K562 (cell line): ENCODE measurements at regions of chr5 and their contacts with region 1.

Region 1: GRCh38 chr5:99032234-99033013 is 103.6 kb upstream of the CHD1 start:
- DNase-seq: peak; percentile 35 to 84 (median 60)
- ATAC-seq: peak; percentile 84
- H3K4me3 ChIP-seq: no peak overlapping the region
- H3K27ac ChIP-seq: peak overlapping the region; percentile 58; the same call in 1 of the 3 replicates
- H3K4me1 ChIP-seq: peaks cover 0 to 13% of the 10 kb centered on the region in 2 experiments; a peak in 2 of 5 replicates
- H3K27me3 ChIP-seq: no peaks in the 10 kb centered on the region
- CTCF ChIP-seq: peak; percentile 78 to 89 (median 84)
- EP300 ChIP-seq: no peak
- POLR2A ChIP-seq: no peak
- RAD21 ChIP-seq: peak; percentile 97

Region 2: GRCh38 chr5:98804066-98804465 is 228.4 kb before region 1 on chr5:
- CTCF ChIA-PET with region 1: no interaction called
- POLR2A ChIA-PET with region 1: no interaction called
- in situ Hi-C with region 1: no loop called
- intact Hi-C with region 1: no loop called
- DNase-seq: no peak
- ATAC-seq: no peak
- H3K4me3 ChIP-seq: no peak overlapping the region
- H3K27ac ChIP-seq: no peak overlapping the region
- H3K4me1 ChIP-seq: no peaks in the 10 kb centered on the region
- H3K27me3 ChIP-seq: no peaks in the 10 kb centered on the region
- CTCF ChIP-seq: no peak
- EP300 ChIP-seq: no peak
- POLR2A ChIP-seq: no peak
- RAD21 ChIP-seq: no peak

Region 3: DNA sequence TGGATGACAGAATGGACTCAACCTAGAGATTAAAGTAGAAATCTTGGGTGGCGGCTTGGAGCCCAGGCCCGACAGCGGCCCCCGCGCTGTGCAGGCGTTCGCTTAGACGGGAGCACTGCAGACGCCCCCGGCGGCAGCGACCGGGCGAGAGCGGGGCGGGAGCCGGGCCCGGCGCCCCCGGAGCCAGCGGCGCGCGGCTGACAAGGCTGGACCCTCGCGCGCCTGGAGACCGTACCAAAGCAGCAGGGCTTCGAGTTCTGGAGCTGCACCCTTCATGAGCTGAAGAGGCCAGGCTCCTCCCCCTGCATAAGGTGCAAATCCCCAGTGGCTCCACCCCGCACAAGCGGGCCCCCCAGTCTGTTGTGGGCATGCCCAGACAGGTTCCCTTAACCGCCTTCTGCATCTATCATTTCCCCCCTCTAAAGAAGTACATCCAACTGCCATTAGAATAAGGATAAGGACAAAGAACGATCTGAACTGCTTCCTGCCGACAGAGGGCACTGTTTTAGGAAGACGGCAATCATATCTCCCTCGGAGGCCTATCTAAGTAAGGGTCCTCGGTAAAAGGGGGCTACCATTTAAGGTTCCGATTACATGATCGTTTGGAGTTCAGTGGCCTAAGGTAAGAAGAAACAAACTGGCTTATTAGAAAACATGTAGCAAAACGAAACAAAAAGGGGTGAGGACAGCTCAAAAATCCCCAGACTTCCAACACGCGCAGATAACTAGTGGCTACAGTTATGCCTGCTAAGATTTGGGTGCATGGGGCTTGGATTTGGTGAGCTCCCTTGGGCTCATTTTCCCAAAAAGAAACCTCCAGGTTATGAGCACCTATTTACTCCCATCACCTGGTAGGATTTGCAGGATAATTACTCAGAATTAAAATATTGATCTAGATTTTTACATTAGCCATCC is 192.7 kb before region 1 on chr5:
- CTCF ChIA-PET with region 1: no interaction called
- POLR2A ChIA-PET with region 1: no interaction called
- in situ Hi-C with region 1: no loop called
- intact Hi-C with region 1: loop called (anchors 5 kb)
- DNase-seq: peak in 2 of 4 experiments; percentile 13 to 47
- ATAC-seq: peak; percentile 91
- H3K4me3 ChIP-seq: no peak overlapping the region
- H3K27ac ChIP-seq: no peak overlapping the region
- H3K4me1 ChIP-seq: peaks cover 0 to 3% of the 10 kb centered on the region in 2 experiments; a peak in 1 of 5 replicates
- H3K27me3 ChIP-seq: no peaks in the 10 kb centered on the region
- CTCF ChIP-seq: peak; percentile 27 to 41 (median 30); a peak in 4 of 6 replicates
- EP300 ChIP-seq: no peak
- POLR2A ChIP-seq: no peak
- RAD21 ChIP-seq: peak in 1 of 2 experiments; percentile 34; a peak in 2 of 4 replicates

Region 4: DNA sequence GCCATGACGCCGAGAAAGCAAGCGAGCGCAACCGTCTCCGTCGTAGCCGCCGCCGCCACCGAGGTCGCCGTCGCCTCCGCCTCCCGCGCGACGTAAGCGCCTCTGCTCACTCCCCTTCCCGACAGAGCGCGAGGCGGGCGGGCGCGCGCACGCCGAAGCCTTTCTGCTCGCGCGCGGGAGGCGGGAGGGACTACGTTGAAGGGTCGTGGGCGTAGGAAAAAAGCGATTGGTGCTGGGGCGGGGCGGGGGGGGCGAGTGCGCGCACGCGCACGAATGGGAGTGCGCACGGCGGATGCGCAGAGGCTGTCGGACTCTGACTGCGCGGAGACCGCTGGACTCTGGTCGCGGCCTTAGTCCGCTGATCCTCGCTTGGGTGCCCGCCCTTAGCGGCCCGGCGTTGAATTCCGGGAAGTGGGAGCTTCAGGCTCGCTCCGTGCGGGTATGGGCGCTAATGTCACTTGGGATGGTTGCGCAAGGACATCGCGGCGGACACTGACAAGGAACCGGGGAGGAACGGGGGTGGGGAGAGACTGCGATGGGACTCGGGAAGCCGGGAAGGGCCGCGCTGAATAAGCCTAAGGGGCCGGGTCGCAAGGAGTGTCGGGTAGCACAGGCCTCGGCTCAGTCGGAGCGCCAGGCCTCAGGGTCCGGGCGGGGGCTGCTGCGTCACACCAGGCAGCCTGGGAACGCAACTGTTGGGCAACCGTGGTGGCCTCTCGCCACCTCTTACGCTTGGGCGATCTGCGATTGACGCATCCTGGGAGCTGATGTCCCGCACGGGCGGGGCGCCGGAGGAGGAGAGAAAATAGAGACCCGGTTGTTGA is 103.3 kb before region 1 on chr5 and contains the start of gene CHD1:
- CTCF ChIA-PET with region 1: no interaction called
- POLR2A ChIA-PET with region 1: no interaction called
- in situ Hi-C with region 1: loop called (anchors 10 kb)
- intact Hi-C with region 1: loop called (anchors 5 kb)
- DNase-seq: peak; percentile 91 to 98 (median 94)
- ATAC-seq: peak; percentile 81
- H3K4me3 ChIP-seq: peak within 1 kb of the TSS; percentile 91
- H3K27ac ChIP-seq: peak within 1 kb of the TSS; percentile 100
- H3K4me1 ChIP-seq: peaks cover 5 to 9% of the 10 kb centered on the region in 2 experiments; a peak in 4 of 5 replicates
- H3K27me3 ChIP-seq: no peaks in the 10 kb centered on the region
- CTCF ChIP-seq: no peak
- EP300 ChIP-seq: peak; percentile 37; the same call in 1 of the 2 replicates
- POLR2A ChIP-seq: peak; percentile 98
- RAD21 ChIP-seq: no peak
- polyA plus RNA-seq, gene CHD1: 27.3 to 28.6 TPM

Region 5: DNA sequence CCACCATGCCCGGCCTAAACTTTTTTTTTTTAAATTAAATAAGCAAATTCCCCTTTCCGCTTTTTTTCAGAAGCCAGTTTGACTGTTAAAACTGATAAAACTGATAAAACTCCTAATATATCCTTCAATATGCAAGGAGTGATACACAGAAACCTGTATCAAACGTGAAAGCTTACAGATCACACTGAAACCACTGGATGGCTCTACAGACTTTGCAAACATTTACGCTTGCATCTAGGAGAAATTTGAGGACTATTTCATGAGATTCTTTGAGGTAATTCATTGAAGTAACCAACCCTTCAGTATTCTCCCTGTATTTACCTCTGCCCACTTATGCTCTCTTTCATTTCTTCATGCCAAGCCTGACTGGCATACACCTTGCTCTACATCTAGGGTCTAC is 63.0 kb before region 1 on chr5:
- CTCF ChIA-PET with region 1: no interaction called
- POLR2A ChIA-PET with region 1: no interaction called
- in situ Hi-C with region 1: no loop called
- intact Hi-C with region 1: loop called (anchors 1 kb)
- DNase-seq: no peak
- ATAC-seq: peak; percentile 52; the same call in 2 of the 3 replicates
- H3K4me3 ChIP-seq: no peak overlapping the region
- H3K27ac ChIP-seq: no peak overlapping the region
- H3K4me1 ChIP-seq: peaks cover 1 to 4% of the 10 kb centered on the region in 2 experiments; a peak in 4 of 5 replicates
- H3K27me3 ChIP-seq: no peaks in the 10 kb centered on the region
- CTCF ChIP-seq: peak in 1 of 3 experiments; percentile 41; a peak in 2 of 6 replicates
- EP300 ChIP-seq: no peak
- POLR2A ChIP-seq: no peak
- RAD21 ChIP-seq: 0 out of 4 replicates have a peak, but pooled peaks of 1 of the 2 experiments have one; percentile 4